Activated B cell treated with CpG ODN at 0.5 μM for 24 hours (primary cell): ENCODE measurements at regions of chr9 and their contacts with region 1.

Region 1: GRCh38 chr9:89602978-89603766 is 1.6 kb upstream of the GADD45G start:
- DNase-seq: peak; percentile 80
- ATAC-seq: peak; percentile 45
- H3K4me3 Mint-ChIP-seq: peak overlapping the region; percentile 84
- H3K27ac Mint-ChIP-seq: peak overlapping the region; percentile 80
- H3K4me1 Mint-ChIP-seq: peaks cover 32% of the 10 kb centered on the region
- H3K27me3 Mint-ChIP-seq: peaks cover 6% of the 10 kb centered on the region
- CTCF ChIP-seq: no peak

Region 2: GRCh38 chr9:89701221-89701798 is 98.1 kb after region 1 on chr9:
- CTCF ChIA-PET with region 1: no interaction called
- POLR2A ChIA-PET with region 1: interaction called, 9 read pairs
- intact Hi-C with region 1: loop called (anchors 1 kb)
- DNase-seq: peak; percentile 54
- ATAC-seq: peak; percentile 97
- H3K4me3 Mint-ChIP-seq: peak overlapping the region; percentile 66
- H3K27ac Mint-ChIP-seq: peak overlapping the region; percentile 57
- H3K4me1 Mint-ChIP-seq: peaks cover 39% of the 10 kb centered on the region
- H3K27me3 Mint-ChIP-seq: no peaks in the 10 kb centered on the region
- CTCF ChIP-seq: no peak

Region 3: DNA sequence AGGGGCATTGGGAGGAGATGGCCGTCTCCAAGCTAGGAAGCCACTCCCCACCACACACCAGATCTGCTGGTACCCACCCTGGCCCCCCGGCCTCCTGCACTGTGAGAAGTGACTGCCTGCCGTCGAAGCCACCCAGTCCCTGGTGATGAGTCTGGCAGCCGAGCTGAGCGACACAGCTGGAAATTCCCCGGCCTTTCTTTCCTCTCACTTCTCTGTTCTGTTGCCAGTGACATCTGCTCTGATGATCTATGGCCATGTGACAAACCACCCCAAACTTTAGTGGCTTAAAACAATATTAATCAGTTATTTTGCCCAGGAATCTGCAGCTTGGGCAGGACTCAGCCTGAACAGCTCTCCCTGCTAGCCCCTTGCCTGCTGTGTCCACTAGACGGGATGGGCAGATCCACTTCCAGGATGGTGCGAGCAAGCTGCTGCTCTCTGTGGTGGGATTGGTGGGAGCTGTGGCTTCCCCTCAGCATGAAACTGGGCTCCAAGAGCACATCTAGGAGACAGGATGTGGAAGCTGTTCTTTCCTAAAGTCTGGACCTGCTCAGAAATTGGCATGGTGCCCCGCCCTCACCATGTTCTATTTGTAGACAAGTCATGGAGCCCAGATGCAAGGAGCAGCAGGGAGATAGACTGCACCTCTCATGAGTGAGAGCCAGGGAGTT is 212.9 kb after region 1 on chr9:
- CTCF ChIA-PET with region 1: interaction called, 7 read pairs
- POLR2A ChIA-PET with region 1: no interaction called
- intact Hi-C with region 1: loop called (anchors 1 kb)
- DNase-seq: peak; percentile 65
- ATAC-seq: peak; percentile 95
- H3K4me3 Mint-ChIP-seq: peak overlapping the region; percentile 21
- H3K27ac Mint-ChIP-seq: peak overlapping the region; percentile 83
- H3K4me1 Mint-ChIP-seq: peaks cover 52% of the 10 kb centered on the region
- H3K27me3 Mint-ChIP-seq: no peaks in the 10 kb centered on the region
- CTCF ChIP-seq: no peak

Region 4: GRCh38 chr9:89999534-90000370 is 396.6 kb after region 1 on chr9:
- CTCF ChIA-PET with region 1: interaction called, 4 read pairs
- POLR2A ChIA-PET with region 1: interaction called, 5 read pairs
- intact Hi-C with region 1: loop called (anchors 2 kb)
- DNase-seq: peak; percentile 37
- ATAC-seq: peak; percentile 88
- H3K4me3 Mint-ChIP-seq: peak overlapping the region; percentile 75
- H3K27ac Mint-ChIP-seq: peak overlapping the region; percentile 90
- H3K4me1 Mint-ChIP-seq: peaks cover 27% of the 10 kb centered on the region
- H3K27me3 Mint-ChIP-seq: no peaks in the 10 kb centered on the region
- CTCF ChIP-seq: no peak

Region 5: DNA sequence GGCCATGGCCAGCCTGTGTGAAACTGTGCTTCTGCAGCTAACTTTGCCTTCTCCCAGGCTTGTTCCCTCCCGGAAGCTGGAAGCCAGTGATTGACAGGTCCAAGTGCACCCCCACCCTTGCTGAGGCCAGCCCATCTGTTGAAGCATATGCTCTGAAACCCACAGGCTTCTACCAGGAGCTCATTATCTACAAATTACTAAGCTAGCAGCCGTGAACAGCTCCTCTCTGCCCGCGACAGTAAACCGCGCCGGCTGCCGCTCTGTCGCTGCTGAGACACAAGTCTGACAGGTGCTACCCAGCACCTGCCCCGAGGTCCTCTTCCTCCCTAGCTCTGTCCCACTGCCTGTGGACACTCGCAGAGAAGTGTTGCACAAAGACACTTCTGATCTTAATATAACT is 492.5 kb after region 1 on chr9:
- CTCF ChIA-PET with region 1: interaction called, 166 read pairs
- POLR2A ChIA-PET with region 1: interaction called, 5 read pairs
- intact Hi-C with region 1: no loop called
- DNase-seq: no peak
- ATAC-seq: no peak
- H3K4me3 Mint-ChIP-seq: no peak overlapping the region
- H3K27ac Mint-ChIP-seq: no peak overlapping the region
- H3K4me1 Mint-ChIP-seq: no peaks in the 10 kb centered on the region
- H3K27me3 Mint-ChIP-seq: peaks cover 7% of the 10 kb centered on the region
- CTCF ChIP-seq: no peak

Region 6: GRCh38 chr9:90142580-90142979 is 539.4 kb after region 1 on chr9:
- CTCF ChIA-PET with region 1: interaction called, 13 read pairs
- POLR2A ChIA-PET with region 1: no interaction called
- intact Hi-C with region 1: no loop called
- DNase-seq: no peak
- ATAC-seq: no peak
- H3K4me3 Mint-ChIP-seq: no peak overlapping the region
- H3K27ac Mint-ChIP-seq: no peak overlapping the region
- H3K4me1 Mint-ChIP-seq: peaks cover 4% of the 10 kb centered on the region
- H3K27me3 Mint-ChIP-seq: peaks cover 19% of the 10 kb centered on the region
- CTCF ChIP-seq: peak; percentile 45

Region 7: DNA sequence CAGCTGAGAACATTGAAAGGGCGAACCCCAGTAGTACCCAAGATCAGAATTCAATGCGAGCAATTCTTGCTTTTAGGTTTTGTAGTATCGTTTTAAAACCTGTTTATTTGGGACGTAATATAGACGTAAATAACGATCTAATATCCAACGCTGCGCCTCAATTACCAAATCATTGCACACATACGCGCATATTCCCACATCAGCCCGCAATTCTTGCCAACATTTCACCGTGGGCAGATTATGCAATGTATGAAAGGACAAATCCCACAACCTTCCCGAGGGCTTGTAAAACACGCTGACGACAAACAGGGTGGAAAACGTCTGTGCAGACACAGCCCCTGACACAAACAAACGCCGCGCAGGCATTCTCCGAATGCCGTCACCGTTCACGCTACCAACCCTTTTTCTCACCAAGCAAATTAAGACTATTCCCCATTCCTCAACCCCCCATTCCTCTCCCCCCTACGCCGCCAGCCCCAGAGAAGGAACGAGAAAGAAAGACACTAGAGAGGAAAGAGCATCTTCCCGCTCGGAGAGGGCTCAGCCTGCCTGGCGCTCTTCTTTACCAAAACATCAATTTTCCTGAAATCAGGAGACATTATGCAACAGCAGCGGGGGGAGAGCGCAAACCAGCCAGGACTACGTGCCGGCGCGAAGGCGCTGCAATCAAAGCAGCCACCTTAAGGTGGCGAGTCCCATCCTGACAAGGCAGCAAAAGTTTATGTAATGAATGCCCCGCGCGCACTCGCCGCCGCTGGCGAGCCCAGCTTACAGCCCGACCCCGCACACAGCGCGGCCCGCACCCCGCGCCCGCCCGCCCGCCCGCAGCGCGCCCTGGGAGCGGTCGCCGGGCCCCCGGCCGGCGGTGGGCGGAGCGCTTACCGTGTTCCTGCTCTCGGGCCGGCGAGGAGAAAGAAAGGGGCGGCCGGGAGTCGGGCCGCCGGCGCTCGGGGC is 1819.9 kb after region 1 on chr9:
- CTCF ChIA-PET with region 1: no interaction called
- POLR2A ChIA-PET with region 1: no interaction called
- intact Hi-C with region 1: loop called (anchors 2 kb)
- DNase-seq: peak; percentile 62
- ATAC-seq: peak; percentile 49
- H3K4me3 Mint-ChIP-seq: peak overlapping the region; percentile 93
- H3K27ac Mint-ChIP-seq: peak overlapping the region; percentile 80
- H3K4me1 Mint-ChIP-seq: peaks cover 38% of the 10 kb centered on the region
- H3K27me3 Mint-ChIP-seq: peaks cover 32% of the 10 kb centered on the region
- CTCF ChIP-seq: no peak